ENCODE measurements at regions of chr6 and their contacts with region 1.

Region 1: DNA sequence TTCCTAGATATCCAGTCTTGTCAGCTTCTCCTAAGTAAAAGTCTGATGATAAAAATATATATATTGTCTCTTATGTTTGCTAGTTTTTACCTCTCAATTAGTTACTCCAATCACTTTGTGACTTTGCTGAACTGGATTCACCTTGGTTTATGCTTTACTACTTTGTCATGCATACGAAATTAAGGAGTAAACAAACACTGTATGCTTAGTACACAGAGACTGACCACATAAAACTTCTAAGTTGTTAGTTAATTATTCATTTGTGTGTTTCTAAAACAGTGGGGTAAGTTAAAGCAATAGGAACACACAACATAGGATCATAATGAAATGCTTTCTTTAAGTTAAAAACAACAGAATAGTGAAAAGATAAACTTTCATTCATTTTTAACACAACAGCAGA is 877.3 kb upstream of the MAP3K7 start:
- DNase-seq: no peak
- ATAC-seq: no peak
- H3K4me3 ChIP-seq: no peak overlapping the region
- H3K27ac ChIP-seq: no peak overlapping the region
- H3K4me1 ChIP-seq: no peaks in the 10 kb centered on the region
- H3K27me3 ChIP-seq: no peaks in the 10 kb centered on the region
- CTCF ChIP-seq: no peak

Region 2: GRCh38 chr6:91428953-91429560 is 35.1 kb before region 1 on chr6:
- intact Hi-C with region 1: no loop called
- DNase-seq: no peak
- ATAC-seq: no peak
- H3K4me3 ChIP-seq: no peak overlapping the region
- H3K27ac ChIP-seq: no peak overlapping the region
- H3K4me1 ChIP-seq: no peaks in the 10 kb centered on the region
- H3K27me3 ChIP-seq: no peaks in the 10 kb centered on the region
- CTCF ChIP-seq: peak in 1 of 9 donors; percentile 62

Region 3: GRCh38 chr6:91523511-91523910 is 59.3 kb after region 1 on chr6:
- intact Hi-C with region 1: loop called in 1 of 10 experiments (anchors 2 kb)
- DNase-seq: no peak
- ATAC-seq: no peak
- H3K4me3 ChIP-seq: no peak overlapping the region
- H3K27ac ChIP-seq: no peak overlapping the region
- H3K4me1 ChIP-seq: no peaks in the 10 kb centered on the region
- H3K27me3 ChIP-seq: no peaks in the 10 kb centered on the region
- CTCF ChIP-seq: no peak

Measured in heart right ventricle (tissue), 16 donors.